Mammary epithelial cell (primary cell): ENCODE measurements at regions of chr20 and their contacts with region 1.

Region 1: GRCh38 chr20:38446441-38447209 is 11.5 kb upstream of the SNHG17 start:
- DNase-seq: peak; percentile 84
- H3K4me3 ChIP-seq: peak overlapping the region; percentile 76 to 80 (median 79)
- H3K27ac ChIP-seq: peak overlapping the region; percentile 64
- H3K4me1 ChIP-seq: peaks cover 9% of the 10 kb centered on the region
- H3K27me3 ChIP-seq: peaks cover 2% of the 10 kb centered on the region
- CTCF ChIP-seq: peak; percentile 89 to 95

Region 2: GRCh38 chr20:38315290-38315966 is 131.2 kb before region 1 on chr20:
- CTCF ChIA-PET with region 1: no interaction called
- dilution Hi-C with region 1: no loop called
- in situ Hi-C with region 1: no loop called
- intact Hi-C with region 1: no loop called
- DNase-seq: no peak
- H3K4me3 ChIP-seq: no peak overlapping the region
- H3K27ac ChIP-seq: no peak overlapping the region
- H3K4me1 ChIP-seq: no peaks in the 10 kb centered on the region
- H3K27me3 ChIP-seq: no peaks in the 10 kb centered on the region
- CTCF ChIP-seq: no peak

Region 3: GRCh38 chr20:38434743-38435554 is 11.7 kb before region 1 on chr20 and contains the start of gene SNHG17:
- CTCF ChIA-PET with region 1: no interaction called
- dilution Hi-C with region 1: no loop called
- in situ Hi-C with region 1: no loop called
- intact Hi-C with region 1: loop called (anchors 1 kb)
- DNase-seq: peak; percentile 82
- H3K4me3 ChIP-seq: peak within 1 kb of the TSS; percentile 66 to 95 (median 79)
- H3K27ac ChIP-seq: peak within 1 kb of the TSS; percentile 82
- H3K4me1 ChIP-seq: peaks cover 21% of the 10 kb centered on the region
- H3K27me3 ChIP-seq: no peaks in the 10 kb centered on the region
- CTCF ChIP-seq: peak; percentile 100
- total RNA-seq, gene SNHG17: 8.0 to 109 TPM